ENCODE measurements at regions of chr4 and their contacts with region 1.

Region 1: DNA sequence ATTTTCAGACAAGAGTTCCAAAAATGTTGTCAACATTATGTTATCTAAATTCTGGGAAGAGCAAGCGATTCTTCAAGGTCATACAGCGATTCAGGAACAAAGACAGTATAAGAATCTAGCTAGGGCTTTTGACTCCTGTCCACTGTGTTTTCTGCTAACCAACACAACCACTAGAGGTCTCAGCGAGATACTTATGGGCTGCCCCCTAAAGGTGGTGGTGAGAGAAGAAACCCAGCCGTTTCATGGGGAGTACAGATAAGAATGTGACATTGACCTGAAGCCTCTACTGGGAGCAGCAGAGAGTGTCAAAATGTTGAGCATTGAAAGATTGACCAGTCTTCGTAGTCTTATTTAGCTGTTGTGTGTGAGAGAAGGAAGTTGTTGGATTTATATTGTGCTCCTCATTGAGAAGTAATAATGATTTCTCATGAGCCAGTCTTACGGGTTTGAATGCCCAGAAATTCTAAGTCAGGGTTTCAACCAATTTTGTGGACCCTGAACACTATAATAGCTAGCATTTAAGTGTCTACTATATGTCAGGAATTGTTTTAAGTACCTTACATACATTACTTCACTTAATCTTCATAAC is 168.3 kb downstream of the SPRY1 start:
- DNase-seq: peak; percentile 43
- ATAC-seq: peak; percentile 100
- H3K4me3 ChIP-seq: no peak overlapping the region
- H3K27ac ChIP-seq: no peak overlapping the region
- H3K4me1 ChIP-seq: no peaks in the 10 kb centered on the region
- H3K27me3 ChIP-seq: no peaks in the 10 kb centered on the region
- CTCF ChIP-seq: peak; percentile 94 to 99 (median 95)
- EP300 ChIP-seq: no peak
- POLR2A ChIP-seq: no peak
- RAD21 ChIP-seq: peak; percentile 86

Region 2: GRCh38 chr4:123102897-123103471 is 461.9 kb before region 1 on chr4:
- CTCF ChIA-PET with region 1: interaction called, 5 read pairs
- POLR2A ChIA-PET with region 1: no interaction called
- RAD21 ChIA-PET with region 1: interaction called, 3 read pairs
- SMC1A ChIA-PET with region 1: interaction called, 5 read pairs
- in situ Hi-C with region 1: no loop called
- intact Hi-C with region 1: loop called (anchors 5 kb)
- DNase-seq: no peak
- ATAC-seq: peak; percentile 82
- H3K4me3 ChIP-seq: no peak overlapping the region
- H3K27ac ChIP-seq: no peak overlapping the region
- H3K4me1 ChIP-seq: no peaks in the 10 kb centered on the region
- H3K27me3 ChIP-seq: no peaks in the 10 kb centered on the region
- CTCF ChIP-seq: peak; percentile 58 to 71 (median 68); a peak in 5 of 6 replicates
- EP300 ChIP-seq: no peak
- POLR2A ChIP-seq: no peak
- RAD21 ChIP-seq: peak; percentile 82

Region 3: DNA sequence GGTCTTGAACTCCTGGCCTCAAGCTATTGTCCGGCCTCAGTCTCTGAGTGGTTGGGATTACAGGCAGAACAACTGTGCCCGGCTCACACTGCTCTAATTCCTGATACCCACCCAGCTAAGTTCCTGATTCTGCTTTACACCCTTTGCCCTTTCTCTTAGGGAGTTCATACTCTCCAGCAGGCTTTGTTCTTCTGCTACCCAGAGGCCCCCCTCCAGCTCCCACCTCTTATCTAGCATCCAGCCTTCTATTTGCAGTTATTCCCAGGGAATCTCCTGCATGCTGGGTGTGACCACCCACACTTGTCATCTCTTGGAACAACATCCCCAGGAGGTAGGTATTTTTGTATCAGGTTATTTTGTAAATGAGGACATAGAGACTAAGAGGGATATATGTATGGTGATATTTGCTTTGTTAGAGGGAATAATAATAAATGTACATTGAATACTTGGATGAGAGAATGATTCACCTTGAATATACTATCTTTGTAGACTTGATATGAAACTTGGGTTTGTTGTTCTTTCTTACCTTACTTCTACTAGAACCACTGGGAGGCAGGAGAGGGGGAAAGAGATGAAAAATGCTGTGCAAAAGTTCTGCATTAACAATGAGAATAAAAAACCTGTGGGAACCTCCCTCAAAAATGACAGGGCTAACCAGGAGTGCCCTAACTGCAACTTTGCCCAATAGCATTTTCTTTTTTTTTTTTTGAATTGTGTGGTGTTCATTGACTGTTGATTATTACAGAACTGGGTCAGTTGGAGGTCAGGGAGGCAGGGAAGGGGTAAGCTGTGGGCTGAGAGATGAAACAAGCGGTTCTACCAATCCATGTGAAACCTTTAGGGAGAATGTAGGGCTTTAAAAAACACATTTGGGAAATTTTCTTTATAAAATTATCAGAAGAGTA is 10.9 kb before region 1 on chr4:
- CTCF ChIA-PET with region 1: interaction called, 15 read pairs
- POLR2A ChIA-PET with region 1: no interaction called
- RAD21 ChIA-PET with region 1: no interaction called
- SMC1A ChIA-PET with region 1: interaction called, 6 read pairs
- in situ Hi-C with region 1: no loop called
- intact Hi-C with region 1: no loop called
- DNase-seq: no peak
- ATAC-seq: no peak
- H3K4me3 ChIP-seq: no peak overlapping the region
- H3K27ac ChIP-seq: no peak overlapping the region
- H3K4me1 ChIP-seq: no peaks in the 10 kb centered on the region
- H3K27me3 ChIP-seq: no peaks in the 10 kb centered on the region
- CTCF ChIP-seq: no peak
- EP300 ChIP-seq: no peak
- POLR2A ChIP-seq: no peak
- RAD21 ChIP-seq: no peak

Region 4: GRCh38 chr4:123649645-123650391 is 85.0 kb after region 1 on chr4:
- CTCF ChIA-PET with region 1: interaction called, 31 read pairs
- POLR2A ChIA-PET with region 1: no interaction called
- RAD21 ChIA-PET with region 1: interaction called, 22 read pairs
- SMC1A ChIA-PET with region 1: interaction called, 27 read pairs
- in situ Hi-C with region 1: no loop called
- intact Hi-C with region 1: no loop called
- DNase-seq: no peak
- ATAC-seq: peak; percentile 72
- H3K4me3 ChIP-seq: no peak overlapping the region
- H3K27ac ChIP-seq: no peak overlapping the region
- H3K4me1 ChIP-seq: no peaks in the 10 kb centered on the region; the same call in 1 of the 2 replicates
- H3K27me3 ChIP-seq: no peaks in the 10 kb centered on the region
- CTCF ChIP-seq: no peak
- EP300 ChIP-seq: no peak
- POLR2A ChIP-seq: no peak
- RAD21 ChIP-seq: no peak

Region 5: DNA sequence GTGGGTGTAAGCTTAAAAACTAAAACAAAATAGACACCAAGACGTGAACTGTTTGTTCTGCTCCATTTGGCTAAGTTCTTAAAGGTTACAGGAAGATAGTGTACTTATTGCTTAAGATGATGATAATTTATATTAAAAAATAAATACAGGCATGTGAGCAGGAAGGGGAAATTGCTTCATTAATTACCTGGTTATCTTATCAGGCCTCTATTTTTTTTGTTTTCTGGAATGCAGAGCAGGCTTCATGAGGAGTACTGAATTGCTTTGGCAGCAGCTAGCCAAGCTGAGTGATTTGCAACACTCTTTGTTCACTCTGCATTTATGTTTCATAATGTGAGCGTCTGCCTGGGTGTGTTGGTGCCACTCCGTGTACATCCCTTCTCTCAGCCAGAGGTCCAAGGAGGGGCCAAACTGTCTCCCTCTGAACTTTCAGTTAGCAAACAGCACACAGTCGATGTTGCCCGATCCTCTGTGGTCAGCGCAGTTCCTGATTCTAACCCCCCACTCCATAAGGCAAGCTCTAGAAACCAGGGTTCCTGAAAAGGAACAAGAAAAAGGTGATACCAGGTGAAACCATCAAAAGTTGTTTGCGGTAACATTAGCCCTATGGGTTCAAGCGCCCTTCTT is 179.9 kb after region 1 on chr4:
- CTCF ChIA-PET with region 1: no interaction called
- POLR2A ChIA-PET with region 1: no interaction called
- RAD21 ChIA-PET with region 1: no interaction called
- SMC1A ChIA-PET with region 1: no interaction called
- in situ Hi-C with region 1: no loop called
- intact Hi-C with region 1: loop called (anchors 10 kb)
- DNase-seq: no peak
- ATAC-seq: no peak
- H3K4me3 ChIP-seq: no peak overlapping the region
- H3K27ac ChIP-seq: no peak overlapping the region
- H3K4me1 ChIP-seq: no peaks in the 10 kb centered on the region
- H3K27me3 ChIP-seq: no peaks in the 10 kb centered on the region
- CTCF ChIP-seq: no peak
- EP300 ChIP-seq: no peak
- POLR2A ChIP-seq: no peak
- RAD21 ChIP-seq: no peak

Measured in GM12878 (cell line).